HAP-1 (cell line): ENCODE measurements at regions of chr17 and their contacts with region 1.

Region 1: GRCh38 chr17:78708510-78708973 is 73.5 kb downstream of the CYTH1 start:
- DNase-seq: peak; percentile 53 to 72
- H3K4me3 ChIP-seq: no peak overlapping the region
- H3K4me1 ChIP-seq: no peaks in the 10 kb centered on the region
- H3K27me3 ChIP-seq: no peaks in the 10 kb centered on the region

Region 2: DNA sequence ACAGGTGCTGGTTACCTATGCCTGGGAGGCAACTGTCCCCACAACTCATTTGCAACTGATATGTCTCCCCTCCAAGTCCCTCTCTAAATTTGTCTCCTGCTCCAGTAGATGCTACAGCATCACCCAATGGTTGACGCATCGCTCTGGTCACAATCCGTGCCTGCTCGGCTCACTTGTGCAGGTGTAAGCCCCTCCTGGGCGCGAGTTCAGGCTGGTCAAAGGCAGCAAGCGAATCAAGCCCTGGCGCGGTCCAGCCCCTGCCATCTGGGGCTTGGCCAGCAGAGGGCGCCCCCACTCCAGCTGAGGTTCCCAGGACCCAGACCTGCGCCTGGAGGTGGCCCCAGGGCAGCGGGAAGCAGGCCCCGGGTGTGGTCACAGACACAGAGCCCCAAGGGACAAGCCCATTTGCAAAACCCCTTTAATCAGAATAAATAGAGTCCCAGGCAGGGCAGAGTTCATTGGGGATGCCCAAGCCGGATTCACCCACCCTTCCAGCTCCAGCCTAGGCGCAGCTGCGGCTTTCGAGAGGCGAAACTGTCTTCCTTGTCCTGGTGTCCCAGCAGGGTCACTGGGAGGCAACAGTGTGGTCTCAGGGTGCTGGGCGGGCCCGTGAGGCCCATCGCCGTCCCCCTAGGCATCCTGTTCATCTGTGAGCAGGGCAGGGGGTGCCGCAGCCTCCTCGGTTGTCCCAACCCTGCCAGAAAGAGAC is 595.9 kb before region 1 on chr17:
- in situ Hi-C with region 1: loop called (anchors 25 kb)
- DNase-seq: peak; percentile 37 to 91
- H3K4me3 ChIP-seq: no peak overlapping the region
- H3K4me1 ChIP-seq: peaks cover 2% of the 10 kb centered on the region
- H3K27me3 ChIP-seq: no peaks in the 10 kb centered on the region

Region 3: GRCh38 chr17:78497115-78497540 is 211.4 kb before region 1 on chr17:
- in situ Hi-C with region 1: loop called (anchors 10 kb)
- DNase-seq: peak; percentile 63 to 81
- H3K4me3 ChIP-seq: no peak overlapping the region
- H3K4me1 ChIP-seq: no peaks in the 10 kb centered on the region
- H3K27me3 ChIP-seq: peaks cover 13% of the 10 kb centered on the region

Region 4: DNA sequence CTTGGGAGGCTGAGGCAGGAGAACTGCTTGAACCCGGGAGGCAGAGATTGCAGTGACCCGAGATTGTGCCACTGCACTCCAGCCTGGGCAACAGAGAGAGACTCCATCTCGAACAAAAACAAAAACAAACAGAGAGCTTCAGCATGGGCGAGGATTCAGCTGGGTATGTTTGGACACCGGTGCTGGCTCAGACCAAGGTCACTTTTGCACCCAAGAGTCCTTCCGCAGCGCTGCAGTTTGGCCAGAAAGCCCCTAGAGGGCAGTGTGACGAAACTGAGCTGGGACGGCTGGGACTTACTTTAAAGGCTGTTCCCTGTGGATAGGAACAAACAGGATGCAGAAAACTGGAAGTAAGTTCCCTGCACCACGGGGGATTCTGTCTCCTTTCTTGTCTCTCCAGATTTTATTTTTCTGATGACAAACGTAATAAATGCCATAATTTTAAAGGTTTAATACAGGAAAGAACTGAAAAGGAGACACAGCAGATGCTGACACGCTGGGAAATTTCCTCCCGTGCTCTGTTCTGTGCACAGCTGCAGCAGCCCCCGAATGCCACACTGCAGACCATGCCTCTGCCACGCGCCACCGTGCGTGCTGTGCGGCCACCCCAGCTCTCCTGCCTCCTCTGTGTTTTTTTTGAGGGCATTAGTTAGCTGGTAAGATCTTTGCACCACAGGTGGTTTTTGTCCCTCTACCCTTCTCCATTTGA is 157.3 kb after region 1 on chr17:
- in situ Hi-C with region 1: no loop called
- DNase-seq: peak; percentile 56 to 86
- H3K4me3 ChIP-seq: no peak overlapping the region
- H3K4me1 ChIP-seq: peaks cover 3% of the 10 kb centered on the region; the same call in 1 of the 2 replicates
- H3K27me3 ChIP-seq: no peaks in the 10 kb centered on the region